Endothelial cell of umbilical vein (primary cell): ENCODE measurements at regions of chr3 and their contacts with region 1.

Region 1: GRCh38 chr3:56997675-56998074 is 62.8 kb upstream of the SPATA12 start:
- DNase-seq: no peak
- H3K4me3 ChIP-seq: no peak overlapping the region
- H3K27ac ChIP-seq: no peak overlapping the region
- H3K4me1 ChIP-seq: peaks cover 3% of the 10 kb centered on the region
- H3K27me3 ChIP-seq: no peaks in the 10 kb centered on the region
- CTCF ChIP-seq: no peak
- POLR2A ChIP-seq: no peak

Region 2: DNA sequence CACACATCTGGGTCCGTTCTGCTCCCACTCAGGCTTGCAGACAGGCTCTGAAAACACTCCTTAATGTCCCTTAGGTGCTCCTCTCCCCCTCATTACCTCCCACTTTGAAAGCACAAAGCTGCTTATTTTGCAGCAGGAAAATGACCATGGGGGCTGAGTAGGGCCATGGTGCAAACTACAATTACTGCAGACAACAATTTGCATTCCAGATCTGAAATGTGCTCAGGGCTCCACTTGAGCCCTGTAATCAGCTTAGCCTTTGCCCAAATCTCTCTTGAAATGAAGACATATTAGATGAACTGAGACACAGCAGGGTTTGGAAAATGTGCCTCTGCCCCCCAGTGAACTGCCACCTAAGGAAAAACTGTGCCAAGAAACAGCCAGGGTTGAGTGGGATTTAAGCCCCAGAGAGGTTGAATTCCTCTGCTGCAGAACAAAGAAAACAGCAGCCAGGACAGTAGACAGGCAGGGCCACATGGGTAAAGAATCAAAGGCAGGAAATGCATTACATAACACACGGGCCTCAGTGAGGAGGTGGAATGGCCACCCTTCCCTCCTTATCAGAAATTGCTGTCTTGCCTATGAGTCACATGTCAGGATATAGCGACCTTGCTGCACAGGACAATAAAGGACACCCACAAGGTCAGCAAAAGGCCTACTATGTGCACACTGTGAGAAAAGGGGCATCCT is 69.2 kb before region 1 on chr3:
- CTCF ChIA-PET with region 1: no interaction called
- POLR2A ChIA-PET with region 1: no interaction called
- dilution Hi-C with region 1: no loop called
- intact Hi-C with region 1: no loop called
- DNase-seq: peak; percentile 76
- H3K4me3 ChIP-seq: no peak overlapping the region
- H3K27ac ChIP-seq: peak overlapping the region; percentile 57
- H3K4me1 ChIP-seq: peaks cover 81% of the 10 kb centered on the region
- H3K27me3 ChIP-seq: no peaks in the 10 kb centered on the region
- CTCF ChIP-seq: no peak
- POLR2A ChIP-seq: no peak

Region 3: GRCh38 chr3:57007513-57008460 is 10.1 kb after region 1 on chr3:
- CTCF ChIA-PET with region 1: interaction called, 18 read pairs
- POLR2A ChIA-PET with region 1: no interaction called
- dilution Hi-C with region 1: no loop called
- intact Hi-C with region 1: no loop called
- DNase-seq: peak; percentile 77
- H3K4me3 ChIP-seq: no peak overlapping the region
- H3K27ac ChIP-seq: peak overlapping the region; percentile 9
- H3K4me1 ChIP-seq: peaks cover 16% of the 10 kb centered on the region
- H3K27me3 ChIP-seq: no peaks in the 10 kb centered on the region
- CTCF ChIP-seq: no peak
- POLR2A ChIP-seq: no peak

Region 4: GRCh38 chr3:57087361-57088092 is 89.9 kb after region 1 on chr3:
- CTCF ChIA-PET with region 1: interaction called, 12 read pairs
- POLR2A ChIA-PET with region 1: no interaction called
- dilution Hi-C with region 1: no loop called
- intact Hi-C with region 1: no loop called
- DNase-seq: no peak
- H3K4me3 ChIP-seq: no peak overlapping the region
- H3K27ac ChIP-seq: no peak overlapping the region
- H3K4me1 ChIP-seq: no peaks in the 10 kb centered on the region
- H3K27me3 ChIP-seq: peaks cover 0 to 4% of the 10 kb centered on the region in 2 experiments
- CTCF ChIP-seq: no peak
- POLR2A ChIP-seq: no peak

Region 5: DNA sequence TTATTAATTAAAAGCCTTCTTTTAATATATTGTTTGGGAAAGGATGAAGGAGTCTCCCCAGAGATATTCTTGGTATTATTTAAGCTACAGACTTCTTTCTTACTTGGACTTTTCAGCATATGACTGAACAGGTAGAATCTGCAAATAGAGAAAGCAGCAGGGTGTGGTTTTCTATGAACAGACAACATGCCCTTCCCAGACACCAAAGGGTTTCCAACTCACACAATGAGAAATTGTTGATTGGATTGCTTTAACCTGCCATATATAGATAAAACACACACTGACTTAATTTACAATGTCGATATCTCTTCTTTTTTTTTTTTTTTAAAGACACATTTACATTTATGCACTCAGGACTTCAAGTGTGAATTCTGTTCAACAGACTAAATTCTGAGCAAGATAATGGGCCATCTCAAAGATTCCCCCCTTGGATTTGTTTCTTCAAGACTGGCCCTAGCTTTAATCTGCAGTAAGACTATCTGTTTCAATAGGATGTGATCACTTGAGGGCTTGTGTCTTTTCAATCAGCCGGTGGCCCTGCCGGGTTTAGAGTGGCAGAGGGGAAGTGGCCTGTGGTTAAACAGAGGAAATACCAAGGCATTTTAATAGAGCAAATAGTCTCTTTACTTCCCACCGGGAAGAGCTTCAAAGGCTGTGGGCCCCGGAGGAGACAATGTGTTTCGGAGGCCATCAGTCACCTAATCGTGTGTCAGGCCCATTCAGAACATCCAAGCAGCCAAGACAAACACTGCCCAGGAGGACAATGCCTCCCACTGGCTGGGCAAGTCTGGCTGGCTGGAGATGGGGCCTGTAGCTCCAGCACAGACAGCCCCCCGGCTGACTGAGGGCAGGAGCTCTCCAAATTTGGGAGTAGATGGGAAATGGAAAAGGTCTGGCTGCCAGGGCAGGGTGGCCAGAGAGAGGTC is 161.4 kb after region 1 on chr3:
- CTCF ChIA-PET with region 1: interaction called, 3 read pairs
- POLR2A ChIA-PET with region 1: no interaction called
- dilution Hi-C with region 1: no loop called
- intact Hi-C with region 1: loop called (anchors 10 kb)
- DNase-seq: peak; percentile 18
- H3K4me3 ChIP-seq: no peak overlapping the region
- H3K27ac ChIP-seq: no peak overlapping the region
- H3K4me1 ChIP-seq: peaks cover 6% of the 10 kb centered on the region
- H3K27me3 ChIP-seq: peaks cover 67 to 73% of the 10 kb centered on the region in 2 experiments
- CTCF ChIP-seq: no peak
- POLR2A ChIP-seq: no peak

Region 6: DNA sequence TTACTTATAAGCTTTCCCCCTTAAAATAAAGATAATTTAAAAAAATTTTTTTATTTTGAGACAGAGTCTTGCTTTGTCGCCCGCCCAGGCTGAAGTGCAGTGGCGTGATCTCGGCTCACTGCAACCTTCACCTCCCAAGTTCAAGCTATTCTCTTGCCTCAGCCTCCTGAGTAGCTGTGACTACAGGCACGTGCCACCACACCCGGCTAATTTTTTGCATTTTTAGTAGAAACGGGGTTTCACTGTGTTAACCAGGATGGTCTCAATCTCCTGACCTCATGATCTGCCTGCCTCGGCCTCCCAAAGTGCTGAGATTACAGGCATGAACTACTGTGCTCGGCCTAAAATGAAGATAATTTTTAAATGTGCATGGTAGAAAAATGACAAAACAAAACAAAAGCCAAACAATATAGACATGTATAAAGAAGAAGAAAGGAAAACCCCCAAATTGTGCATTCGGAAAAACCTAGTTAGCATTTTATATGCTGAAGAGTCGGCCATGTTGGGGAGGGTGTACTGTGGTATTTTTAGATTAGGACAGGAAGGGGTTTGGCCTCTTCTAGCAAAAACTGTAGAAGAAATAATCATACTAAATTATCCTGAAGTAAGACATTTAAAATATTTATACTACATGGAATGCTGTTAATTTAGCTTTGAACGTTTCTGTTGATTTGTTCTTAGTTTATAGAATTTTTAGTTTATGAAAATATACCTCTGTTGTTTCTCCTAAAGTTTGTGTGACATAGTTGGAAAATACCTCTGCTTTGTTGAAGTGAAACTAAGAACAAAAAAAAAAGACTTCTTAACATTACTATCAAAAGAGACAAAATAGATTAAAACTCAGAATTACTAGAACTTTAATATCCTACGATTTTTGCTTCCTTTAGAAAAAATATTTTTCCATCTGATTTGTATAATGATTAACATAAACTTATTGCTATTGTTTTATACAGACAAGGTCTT is 237.2 kb after region 1 on chr3:
- CTCF ChIA-PET with region 1: no interaction called
- POLR2A ChIA-PET with region 1: no interaction called
- dilution Hi-C with region 1: no loop called
- intact Hi-C with region 1: no loop called
- DNase-seq: no peak
- H3K4me3 ChIP-seq: no peak overlapping the region
- H3K27ac ChIP-seq: no peak overlapping the region
- H3K4me1 ChIP-seq: no peaks in the 10 kb centered on the region
- H3K27me3 ChIP-seq: no peaks in the 10 kb centered on the region
- CTCF ChIP-seq: no peak
- POLR2A ChIP-seq: no peak